Naive thymus-derived CD4-positive, alpha-beta T cell (primary cell): ENCODE measurements at regions of chr7 and their contacts with region 1.

Region 1: GRCh38 chr7:27160546-27161213 is 4.2 kb upstream of the HOXA7 start:
- DNase-seq: peak; percentile 69 to 89 (median 84)
- ATAC-seq: peak; percentile 91
- H3K4me3 ChIP-seq: peak overlapping the region; percentile 81
- H3K4me3 Mint-ChIP-seq: peak overlapping the region; percentile 71 to 88 (median 80)
- H3K27ac ChIP-seq: no peak overlapping the region
- H3K27ac Mint-ChIP-seq: peak overlapping the region in 1 of 9 donors; percentile 33
- H3K4me1 ChIP-seq: peaks cover 24 to 38% of the 10 kb centered on the region in 2 donors
- H3K4me1 Mint-ChIP-seq: peaks cover 15 to 52% (median 34%) of the 10 kb centered on the region in 7 donors
- H3K27me3 ChIP-seq: peaks cover 27 to 61% of the 10 kb centered on the region in 2 donors
- H3K27me3 Mint-ChIP-seq: peaks cover 62 to 89% (median 77%) of the 10 kb centered on the region in 5 donors

Region 2: GRCh38 chr7:25851332-25852210 is 1309.1 kb before region 1 on chr7:
- CTCF ChIA-PET with region 1: no interaction called
- POLR2A ChIA-PET with region 1: no interaction called
- intact Hi-C with region 1: loop called in 1 of 2 experiments (anchors 2 kb)
- DNase-seq: peak in 8 of 9 donors; percentile 43 to 69 (median 62)
- ATAC-seq: peak; percentile 84
- H3K4me3 ChIP-seq: no peak overlapping the region
- H3K4me3 Mint-ChIP-seq: peak overlapping the region; percentile 16 to 85 (median 76)
- H3K27ac ChIP-seq: no peak overlapping the region
- H3K27ac Mint-ChIP-seq: peak overlapping the region in 7 of 9 donors; percentile 5 to 79 (median 74)
- H3K4me1 ChIP-seq: peaks cover 3 to 9% of the 10 kb centered on the region in 2 donors
- H3K4me1 Mint-ChIP-seq: peaks cover 4 to 27% (median 19%) of the 10 kb centered on the region in 7 donors
- H3K27me3 ChIP-seq: peaks cover 29 to 50% of the 10 kb centered on the region in 2 donors
- H3K27me3 Mint-ChIP-seq: peaks cover 43 to 63% (median 59%) of the 10 kb centered on the region in 5 donors

Region 3: GRCh38 chr7:25894902-25895791 is 1265.5 kb before region 1 on chr7:
- CTCF ChIA-PET with region 1: interaction called, 6 read pairs
- POLR2A ChIA-PET with region 1: interaction called, 3 read pairs
- intact Hi-C with region 1: loop called (anchors 1 kb)
- DNase-seq: peak; percentile 37 to 66 (median 52)
- ATAC-seq: peak; percentile 84
- H3K4me3 ChIP-seq: peak overlapping the region; percentile 46
- H3K4me3 Mint-ChIP-seq: peak overlapping the region; percentile 48 to 93 (median 77)
- H3K27ac ChIP-seq: no peak overlapping the region
- H3K27ac Mint-ChIP-seq: peak overlapping the region in 4 of 9 donors; percentile 9 to 71 (median 38)
- H3K4me1 ChIP-seq: peaks cover 9 to 13% of the 10 kb centered on the region in 2 donors
- H3K4me1 Mint-ChIP-seq: peaks cover 13 to 29% (median 27%) of the 10 kb centered on the region in 7 donors
- H3K27me3 ChIP-seq: no peaks in the 10 kb centered on the region
- H3K27me3 Mint-ChIP-seq: peaks cover 7 to 37% (median 15%) of the 10 kb centered on the region in 5 donors

Region 4: GRCh38 chr7:26078437-26079336 is 1082.0 kb before region 1 on chr7:
- CTCF ChIA-PET with region 1: no interaction called
- POLR2A ChIA-PET with region 1: no interaction called
- intact Hi-C with region 1: loop called in 1 of 2 experiments (anchors 2 kb)
- DNase-seq: peak; percentile 68 to 86 (median 80)
- ATAC-seq: peak; percentile 99
- H3K4me3 ChIP-seq: no peak overlapping the region
- H3K4me3 Mint-ChIP-seq: peak overlapping the region in 7 of 10 donors; percentile 30 to 68 (median 51)
- H3K27ac ChIP-seq: no peak overlapping the region
- H3K27ac Mint-ChIP-seq: no peak overlapping the region
- H3K4me1 ChIP-seq: peaks cover 0 to 10% of the 10 kb centered on the region in 2 donors
- H3K4me1 Mint-ChIP-seq: peaks cover 0 to 10% (median 6%) of the 10 kb centered on the region in 7 donors
- H3K27me3 ChIP-seq: peaks cover 0 to 6% of the 10 kb centered on the region in 2 donors
- H3K27me3 Mint-ChIP-seq: peaks cover 15 to 84% (median 33%) of the 10 kb centered on the region in 5 donors

Region 5: GRCh38 chr7:26291699-26292538 is 868.8 kb before region 1 on chr7 and contains the start of gene SNX10:
- CTCF ChIA-PET with region 1: no interaction called
- POLR2A ChIA-PET with region 1: no interaction called
- intact Hi-C with region 1: loop called in 1 of 2 experiments (anchors 5 kb)
- DNase-seq: peak; percentile 52 to 74 (median 72)
- ATAC-seq: peak; percentile 90
- H3K4me3 ChIP-seq: peak within 1 kb of the TSS; percentile 88
- H3K4me3 Mint-ChIP-seq: peak within 1 kb of the TSS; percentile 78 to 94 (median 91)
- H3K27ac ChIP-seq: peak within 1 kb of the TSS; percentile 58
- H3K27ac Mint-ChIP-seq: peak within 1 kb of the TSS; percentile 45 to 91 (median 82)
- H3K4me1 ChIP-seq: peaks cover 25 to 30% of the 10 kb centered on the region in 2 donors
- H3K4me1 Mint-ChIP-seq: peaks cover 22 to 41% (median 35%) of the 10 kb centered on the region in 7 donors
- H3K27me3 ChIP-seq: no peaks in the 10 kb centered on the region
- H3K27me3 Mint-ChIP-seq: peaks cover 0 to 13% (median 0%) of the 10 kb centered on the region in 5 donors
- total RNA-seq, gene SNX10: 5.0 to 37.0 (median 6.3) TPM

Region 6: GRCh38 chr7:26853788-26854393 is 306.8 kb before region 1 on chr7:
- CTCF ChIA-PET with region 1: interaction called, 10 read pairs
- POLR2A ChIA-PET with region 1: no interaction called
- intact Hi-C with region 1: loop called (anchors 1 kb)
- DNase-seq: peak in 5 of 9 donors; percentile 12 to 36 (median 30)
- ATAC-seq: no peak
- H3K4me3 ChIP-seq: no peak overlapping the region
- H3K4me3 Mint-ChIP-seq: no peak overlapping the region
- H3K27ac ChIP-seq: no peak overlapping the region
- H3K27ac Mint-ChIP-seq: no peak overlapping the region
- H3K4me1 ChIP-seq: no peaks in the 10 kb centered on the region
- H3K4me1 Mint-ChIP-seq: peaks cover 0 to 13% (median 3%) of the 10 kb centered on the region in 7 donors
- H3K27me3 ChIP-seq: peaks cover 0 to 20% of the 10 kb centered on the region in 2 donors
- H3K27me3 Mint-ChIP-seq: peaks cover 44 to 73% (median 48%) of the 10 kb centered on the region in 5 donors

Region 7: GRCh38 chr7:27172823-27173510 is 12.3 kb after region 1 on chr7:
- CTCF ChIA-PET with region 1: no interaction called
- POLR2A ChIA-PET with region 1: interaction called, 4 read pairs
- intact Hi-C with region 1: loop called (anchors 1 kb)
- DNase-seq: peak in 2 of 9 donors; percentile 23 to 40
- ATAC-seq: peak; percentile 15
- H3K4me3 ChIP-seq: peak overlapping the region; percentile 36
- H3K4me3 Mint-ChIP-seq: peak overlapping the region in 9 of 10 donors; percentile 23 to 79 (median 69)
- H3K27ac ChIP-seq: no peak overlapping the region
- H3K27ac Mint-ChIP-seq: peak overlapping the region in 1 of 9 donors; percentile 86
- H3K4me1 ChIP-seq: peaks cover 16 to 25% of the 10 kb centered on the region in 2 donors
- H3K4me1 Mint-ChIP-seq: peaks cover 14 to 43% (median 23%) of the 10 kb centered on the region in 7 donors
- H3K27me3 ChIP-seq: peaks cover 32 to 65% of the 10 kb centered on the region in 2 donors
- H3K27me3 Mint-ChIP-seq: peaks cover 59 to 69% (median 67%) of the 10 kb centered on the region in 5 donors